Psoas muscle (tissue), 8 donors: ENCODE measurements at regions of chr2 and their contacts with region 1.

Region 1: DNA sequence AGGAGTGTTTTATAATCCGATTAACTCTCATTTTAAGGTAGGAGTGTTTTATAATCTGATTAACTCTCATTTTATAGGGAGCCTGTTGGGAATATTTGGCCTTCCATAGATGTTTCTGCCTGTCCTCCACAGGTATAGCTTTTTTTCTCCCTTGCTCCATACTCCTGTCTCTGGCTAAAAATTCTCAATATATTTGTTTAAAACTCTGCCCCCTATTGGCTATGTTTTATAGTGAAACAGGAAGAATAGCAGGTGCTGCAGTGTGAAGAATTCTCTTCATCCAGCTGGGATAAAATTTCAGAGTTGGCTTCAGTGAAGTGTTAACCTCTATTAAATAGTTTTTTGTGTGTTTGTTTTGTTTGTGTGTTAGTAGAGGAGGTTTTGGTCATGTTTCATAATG is 1046.0 kb upstream of the TMEFF2 start:
- DNase-seq: no peak
- ATAC-seq: no peak
- H3K4me3 ChIP-seq: no peak overlapping the region
- H3K27ac ChIP-seq: no peak overlapping the region
- H3K4me1 ChIP-seq: no peaks in the 10 kb centered on the region
- H3K27me3 ChIP-seq: no peaks in the 10 kb centered on the region
- CTCF ChIP-seq: no peak

Region 2: DNA sequence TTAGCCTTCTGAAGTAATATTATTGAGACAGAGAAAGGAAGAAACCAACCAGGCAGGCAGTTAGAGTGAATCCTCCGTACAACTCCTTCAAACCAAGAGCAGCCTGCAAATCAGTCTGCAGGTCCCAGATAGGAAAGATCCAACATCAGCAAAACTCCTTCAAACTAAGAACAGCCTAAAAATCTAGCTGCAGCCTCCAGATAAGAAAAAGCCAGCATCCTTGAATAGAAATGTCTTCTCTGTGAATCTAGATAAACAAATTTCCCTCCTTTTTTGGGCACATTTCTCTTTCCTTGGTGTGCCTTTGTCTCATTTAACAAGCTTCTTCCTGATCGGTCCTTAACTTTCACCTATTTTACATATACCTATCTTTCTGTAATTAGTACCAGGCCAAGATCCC is 41.4 kb before region 1 on chr2:
- intact Hi-C with region 1: loop called in 1 of 2 experiments (anchors 2 kb)
- DNase-seq: no peak
- ATAC-seq: no peak
- H3K4me3 ChIP-seq: no peak overlapping the region
- H3K27ac ChIP-seq: no peak overlapping the region
- H3K4me1 ChIP-seq: no peaks in the 10 kb centered on the region
- H3K27me3 ChIP-seq: no peaks in the 10 kb centered on the region
- CTCF ChIP-seq: no peak